ENCODE measurements at regions of chr13 and their contacts with region 1.

Region 1: DNA sequence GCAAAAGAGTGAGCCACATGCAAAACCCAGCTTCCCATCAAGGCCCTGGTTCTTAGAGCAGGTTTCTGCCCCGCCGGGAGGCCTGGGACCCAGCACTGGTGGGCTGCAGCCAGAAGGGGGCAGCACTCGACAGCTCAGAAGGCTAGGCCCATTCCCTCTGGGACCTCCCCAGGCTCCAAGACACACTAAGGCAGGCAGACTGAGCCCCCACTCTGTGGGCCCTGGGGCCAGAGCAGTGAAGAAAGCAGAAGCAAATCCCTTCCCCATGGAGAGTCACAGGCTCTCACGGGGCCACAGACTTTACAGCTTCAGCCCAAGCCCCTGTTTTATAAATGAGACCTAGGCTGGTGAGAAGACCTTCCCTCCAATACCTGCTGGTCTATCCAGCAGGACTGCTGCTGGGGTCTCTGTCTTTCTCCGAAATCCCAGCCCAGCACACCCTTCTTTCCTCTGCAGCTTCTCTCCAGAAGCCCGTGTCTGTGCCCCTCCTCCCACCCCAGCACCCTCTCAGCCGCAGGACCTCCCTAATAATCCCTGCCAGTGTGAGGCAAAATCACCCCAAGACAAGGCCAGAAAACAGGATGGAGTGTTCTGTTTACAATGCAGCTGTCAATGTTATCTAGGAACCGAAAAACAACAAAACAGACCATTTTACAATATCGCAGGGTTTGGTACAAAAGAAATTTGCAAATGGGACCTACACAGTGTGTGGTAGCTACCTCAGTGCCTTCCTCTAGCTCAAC is 109.3 kb downstream of the ABCC4 start:
- DNase-seq: peak; percentile 18 to 78 (median 62)
- H3K4me3 ChIP-seq: no peak overlapping the region
- H3K27ac ChIP-seq: peak overlapping the region in 3 of 59 donors; percentile 4 to 40 (median 10)
- H3K27me3 ChIP-seq: no peaks in the 10 kb centered on the region
- CTCF ChIP-seq: peak in 55 of 56 donors; percentile 54 to 90 (median 76)

Region 2: DNA sequence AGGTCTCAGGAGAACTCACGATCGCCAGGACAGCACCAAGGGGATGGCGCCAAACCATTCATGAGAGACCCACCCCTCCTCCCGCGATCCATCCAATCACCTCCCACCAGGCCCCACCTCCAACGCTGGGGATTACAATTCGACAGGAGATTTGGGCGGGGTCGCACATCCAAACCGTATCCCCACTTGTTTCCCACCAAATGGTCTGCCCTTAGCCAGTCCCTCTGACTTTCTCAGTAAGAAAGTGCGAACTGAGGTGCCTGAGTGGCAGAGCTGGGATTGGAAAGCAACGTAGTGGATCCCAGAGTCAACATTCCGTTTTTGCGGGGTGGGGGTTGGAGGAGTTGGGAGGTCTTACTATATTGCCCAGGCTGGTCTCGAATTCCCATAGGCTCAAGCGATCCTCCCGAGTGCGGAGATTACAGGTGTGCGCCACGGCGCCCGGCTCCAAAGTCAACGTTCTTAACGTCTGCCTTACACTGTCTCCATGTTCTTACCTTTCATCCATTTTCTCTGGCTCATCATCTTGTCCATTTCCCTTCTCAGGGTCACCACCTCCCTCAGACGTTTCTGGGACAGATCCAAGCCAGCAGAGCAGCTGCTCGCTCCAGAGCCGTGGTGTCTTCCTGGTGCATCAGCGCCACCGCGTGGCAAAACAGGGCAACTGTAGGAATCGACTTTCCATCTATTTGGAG is 212.0 kb after region 1 on chr13:
- intact Hi-C with region 1: loop called (anchors 2 kb)
- DNase-seq: peak; percentile 43 to 91 (median 83)
- H3K4me3 ChIP-seq: peak overlapping the region; percentile 18 to 70 (median 54)
- H3K27ac ChIP-seq: peak overlapping the region in 1 of 59 donors; percentile 7
- H3K27me3 ChIP-seq: no peaks in the 10 kb centered on the region
- CTCF ChIP-seq: peak; percentile 89 to 99 (median 95)

Region 3: GRCh38 chr13:95671597-95671996 is 479.6 kb after region 1 on chr13:
- intact Hi-C with region 1: no loop called
- DNase-seq: no peak
- H3K4me3 ChIP-seq: no peak overlapping the region
- H3K27ac ChIP-seq: no peak overlapping the region
- H3K27me3 ChIP-seq: no peaks in the 10 kb centered on the region
- CTCF ChIP-seq: no peak

Measured in dorsolateral prefrontal cortex (tissue), 120 donors.